ENCODE measurements at regions of chr1 and their contacts with region 1.

Region 1: DNA sequence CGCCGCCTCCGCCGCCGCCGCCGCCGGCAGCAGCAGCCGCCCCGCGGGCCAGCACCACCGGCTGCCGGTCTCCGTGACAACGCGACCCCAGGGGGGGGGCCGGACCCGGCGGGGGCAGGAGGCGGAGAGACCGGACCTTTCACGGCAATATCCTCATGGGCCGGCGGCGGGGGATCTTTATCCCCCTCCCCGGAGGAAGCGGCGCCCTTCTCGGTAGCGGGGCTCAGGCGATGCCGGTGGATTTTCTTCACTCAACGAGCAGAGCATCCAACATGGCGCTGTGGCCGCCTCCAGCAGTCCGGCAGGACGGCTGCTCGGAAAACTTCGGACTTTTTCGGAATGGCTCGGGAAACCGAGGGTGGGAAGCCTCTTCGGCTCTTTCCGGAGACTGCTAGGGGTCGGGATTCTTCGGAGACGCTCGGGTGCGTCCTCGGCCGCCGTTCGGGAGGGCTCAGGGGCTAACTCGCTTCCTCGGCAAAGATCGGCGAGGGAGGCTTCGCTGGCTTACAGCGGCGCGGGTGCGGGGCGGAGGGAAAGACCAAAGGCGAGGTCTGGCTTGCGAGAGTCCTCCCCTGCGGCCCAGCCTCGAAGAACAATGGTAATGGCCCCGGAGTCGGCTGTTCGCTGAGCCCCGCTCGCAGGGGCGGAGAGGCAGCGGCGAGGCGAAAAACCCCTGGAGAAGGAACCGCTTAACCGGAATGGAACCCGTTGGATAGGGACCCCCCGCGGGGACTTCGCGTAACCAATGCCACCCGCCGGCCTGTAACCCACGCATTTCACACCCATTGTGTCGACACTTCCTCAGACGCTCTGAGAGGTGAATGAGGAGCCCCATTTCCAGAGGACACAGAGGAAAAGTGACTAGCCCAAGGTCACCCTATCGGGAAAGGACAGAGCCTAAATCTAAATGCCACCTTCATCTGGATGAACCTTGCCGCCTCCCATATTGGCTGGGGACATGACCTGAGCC is at the start of gene EIF4G3:
- DNase-seq: peak; percentile 99
- ATAC-seq: peak; percentile 97
- H3K4me3 ChIP-seq: peak within 1 kb of the TSS; percentile 91
- H3K27ac ChIP-seq: no peak within 1 kb of the TSS; the same call in 1 of the 2 replicates
- H3K4me1 ChIP-seq: peaks cover 13% of the 10 kb centered on the region
- H3K27me3 ChIP-seq: no peaks in the 10 kb centered on the region
- CTCF ChIP-seq: no peak
- total RNA-seq, gene EIF4G3: 16.9 and 25.0 TPM in 2 replicates

Region 2: DNA sequence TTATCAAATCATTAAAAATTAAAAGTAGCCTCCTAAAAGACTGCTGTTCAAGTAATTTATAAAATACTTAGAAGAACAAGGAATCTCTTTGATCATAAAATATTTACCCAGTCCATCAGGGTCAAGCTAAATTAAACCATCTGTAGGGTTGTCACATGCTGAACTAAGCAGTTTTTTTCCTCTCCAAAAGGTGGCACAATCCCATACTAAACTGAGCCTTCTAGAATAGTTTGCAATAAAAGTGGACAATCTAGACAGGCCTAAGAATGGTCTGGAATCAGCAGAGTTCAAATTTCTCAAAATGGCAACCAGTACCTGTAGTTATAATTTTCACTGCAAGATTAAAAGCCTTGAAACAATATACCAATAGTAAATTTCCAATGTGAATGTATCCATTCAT is 195.0 kb before region 1 on chr1:
- CTCF ChIA-PET with region 1: no interaction called
- POLR2A ChIA-PET with region 1: no interaction called
- intact Hi-C with region 1: loop called (anchors 5 kb)
- DNase-seq: peak; percentile 55
- ATAC-seq: peak; percentile 67
- H3K4me3 ChIP-seq: no peak overlapping the region
- H3K27ac ChIP-seq: no peak overlapping the region
- H3K4me1 ChIP-seq: peaks cover 7% of the 10 kb centered on the region; the same call in 1 of the 2 replicates
- H3K27me3 ChIP-seq: no peaks in the 10 kb centered on the region
- CTCF ChIP-seq: peak; percentile 63

Region 3: GRCh38 chr1:21110163-21110562 is 66.7 kb before region 1 on chr1:
- CTCF ChIA-PET with region 1: no interaction called
- POLR2A ChIA-PET with region 1: interaction called, 22 read pairs
- intact Hi-C with region 1: loop called (anchors 10 kb)
- DNase-seq: no peak
- ATAC-seq: no peak
- H3K4me3 ChIP-seq: no peak overlapping the region
- H3K27ac ChIP-seq: no peak overlapping the region
- H3K4me1 ChIP-seq: no peaks in the 10 kb centered on the region
- H3K27me3 ChIP-seq: no peaks in the 10 kb centered on the region
- CTCF ChIP-seq: no peak

Region 4: DNA sequence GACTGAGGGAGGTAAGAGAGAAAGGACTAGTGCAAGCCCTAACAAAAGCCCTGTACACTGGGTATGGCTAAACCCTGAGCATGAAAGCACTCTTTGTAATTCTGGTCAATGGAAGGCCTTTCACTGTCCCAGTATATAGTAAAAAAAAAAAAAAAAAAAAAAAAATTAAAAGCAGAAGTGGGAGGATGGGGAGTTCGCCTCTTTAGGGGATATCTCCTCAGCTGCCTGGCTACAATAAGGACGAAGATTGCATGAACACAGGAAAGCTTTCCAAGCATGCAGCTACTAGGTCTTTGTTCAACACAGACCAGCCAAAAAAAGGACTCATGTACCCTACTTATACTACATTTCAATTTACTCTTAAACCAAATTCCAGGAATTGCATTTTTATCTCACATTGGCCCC is 59.3 kb before region 1 on chr1:
- CTCF ChIA-PET with region 1: no interaction called
- POLR2A ChIA-PET with region 1: interaction called, 7 read pairs
- intact Hi-C with region 1: loop called (anchors 10 kb)
- DNase-seq: no peak
- ATAC-seq: no peak
- H3K4me3 ChIP-seq: no peak overlapping the region
- H3K27ac ChIP-seq: no peak overlapping the region
- H3K4me1 ChIP-seq: no peaks in the 10 kb centered on the region
- H3K27me3 ChIP-seq: no peaks in the 10 kb centered on the region
- CTCF ChIP-seq: no peak

Region 5: DNA sequence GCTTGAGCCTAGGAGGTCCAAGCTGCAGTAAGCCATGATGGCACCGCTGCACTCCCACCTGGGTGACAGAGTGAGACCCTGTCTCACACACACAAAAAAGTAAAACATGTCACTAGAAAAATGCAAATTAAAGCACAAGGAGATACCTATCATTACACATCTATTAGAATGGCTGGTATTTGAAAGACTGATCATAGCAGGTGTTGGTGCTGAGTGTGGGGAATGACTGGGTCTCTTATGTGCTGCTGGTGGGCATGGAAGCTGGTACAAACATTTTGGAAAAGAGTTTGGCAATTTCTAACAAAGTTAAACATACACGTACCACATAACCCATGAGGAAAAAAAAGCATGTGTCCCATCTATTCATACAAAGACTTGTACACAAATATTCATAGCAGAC is 1132.7 kb after region 1 on chr1:
- CTCF ChIA-PET with region 1: no interaction called
- POLR2A ChIA-PET with region 1: no interaction called
- intact Hi-C with region 1: no loop called
- DNase-seq: no peak
- ATAC-seq: no peak
- H3K4me3 ChIP-seq: no peak overlapping the region
- H3K27ac ChIP-seq: no peak overlapping the region
- H3K4me1 ChIP-seq: no peaks in the 10 kb centered on the region
- H3K27me3 ChIP-seq: peaks cover 20% of the 10 kb centered on the region
- CTCF ChIP-seq: no peak